ENCODE measurements at regions of chr11 and their contacts with region 1.

Region 1: DNA sequence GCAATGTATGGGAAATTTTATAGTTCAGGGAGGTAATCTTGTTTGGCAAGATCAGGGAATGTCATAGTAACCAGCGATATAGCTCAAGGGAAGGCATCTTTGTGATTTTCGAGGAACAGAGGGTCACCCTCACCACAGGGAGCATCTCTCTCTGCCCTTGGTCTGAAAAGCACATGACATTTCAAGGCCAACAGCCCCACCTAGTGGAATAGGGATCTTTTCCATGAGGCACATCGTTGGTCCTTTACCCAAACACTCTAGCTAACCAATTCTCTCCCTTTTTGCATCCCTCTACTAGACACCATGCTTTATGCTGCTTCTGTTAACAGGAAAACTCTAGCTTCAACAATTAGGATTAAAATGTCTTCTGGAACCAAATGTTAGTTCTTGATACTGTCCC is 179.0 kb downstream of the GRM5 start:
- DNase-seq: peak in 4 of 5 donors; percentile 26 to 35 (median 31)
- H3K4me3 ChIP-seq: no peak overlapping the region
- H3K4me3 Mint-ChIP-seq: no peak overlapping the region
- H3K27ac ChIP-seq: no peak overlapping the region
- H3K27ac Mint-ChIP-seq: peak overlapping the region in 1 of 7 donors; percentile 33
- H3K4me1 ChIP-seq: no peaks in the 10 kb centered on the region
- H3K4me1 Mint-ChIP-seq: peaks cover 0 to 2% (median under 1%) of the 10 kb centered on the region in 4 donors
- H3K27me3 ChIP-seq: no peaks in the 10 kb centered on the region
- H3K27me3 Mint-ChIP-seq: no peaks in the 10 kb centered on the region

Region 2: DNA sequence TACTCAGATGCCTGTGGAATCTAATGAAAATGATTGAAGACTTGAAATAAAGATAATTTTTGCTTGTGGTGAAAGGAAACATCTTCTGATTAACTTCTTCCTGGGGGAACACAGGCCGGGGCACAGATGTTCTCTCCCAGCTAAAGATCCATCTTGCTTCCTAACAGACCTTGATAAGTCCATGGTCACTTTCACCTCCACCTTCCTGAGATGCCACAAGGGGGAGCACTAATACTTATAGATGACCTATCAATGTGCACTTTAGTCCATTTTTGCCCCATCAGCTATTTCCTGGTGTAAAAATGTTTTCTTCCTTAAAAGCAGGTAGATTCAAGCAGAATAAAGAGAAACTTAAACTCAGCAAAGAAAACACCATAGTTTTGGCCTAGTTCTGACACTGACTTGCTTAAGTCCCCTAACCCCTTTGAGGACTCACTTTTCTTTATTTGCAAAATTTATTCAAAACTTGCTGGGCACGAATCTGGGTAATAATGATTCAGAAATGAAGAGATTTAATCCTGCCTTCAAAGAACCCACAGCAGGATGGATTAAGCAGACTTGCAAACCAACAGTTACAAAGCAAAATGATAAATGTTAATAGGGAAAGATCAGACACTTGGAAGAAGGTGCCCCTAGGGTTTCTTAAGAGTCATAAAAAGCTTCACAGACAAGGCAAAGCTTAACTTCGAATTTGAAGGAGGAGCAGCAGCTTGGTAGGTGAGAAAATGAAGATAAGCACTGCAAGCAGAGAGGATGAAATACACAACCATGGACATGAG is 870.2 kb before region 1 on chr11:
- CTCF ChIA-PET with region 1: interaction called, 12 read pairs
- POLR2A ChIA-PET with region 1: no interaction called
- intact Hi-C with region 1: loop called (anchors 1 kb)
- DNase-seq: peak; percentile 52 to 61 (median 54)
- H3K4me3 ChIP-seq: no peak overlapping the region
- H3K4me3 Mint-ChIP-seq: no peak overlapping the region
- H3K27ac ChIP-seq: no peak overlapping the region
- H3K27ac Mint-ChIP-seq: no peak overlapping the region
- H3K4me1 ChIP-seq: no peaks in the 10 kb centered on the region
- H3K4me1 Mint-ChIP-seq: no peaks in the 10 kb centered on the region
- H3K27me3 ChIP-seq: no peaks in the 10 kb centered on the region
- H3K27me3 Mint-ChIP-seq: peaks cover 3 to 6% of the 10 kb centered on the region in 2 donors

Region 3: GRCh38 chr11:88103337-88104206 is 783.2 kb before region 1 on chr11:
- CTCF ChIA-PET with region 1: interaction called, 3 read pairs
- POLR2A ChIA-PET with region 1: no interaction called
- intact Hi-C with region 1: loop called (anchors 2 kb)
- DNase-seq: peak in 4 of 5 donors; percentile 17 to 52 (median 38)
- H3K4me3 ChIP-seq: no peak overlapping the region
- H3K4me3 Mint-ChIP-seq: no peak overlapping the region
- H3K27ac ChIP-seq: no peak overlapping the region
- H3K27ac Mint-ChIP-seq: no peak overlapping the region
- H3K4me1 ChIP-seq: no peaks in the 10 kb centered on the region
- H3K4me1 Mint-ChIP-seq: no peaks in the 10 kb centered on the region
- H3K27me3 ChIP-seq: no peaks in the 10 kb centered on the region
- H3K27me3 Mint-ChIP-seq: peaks cover 5 to 7% of the 10 kb centered on the region in 2 donors

Region 4: GRCh38 chr11:88231894-88232482 is 654.8 kb before region 1 on chr11:
- CTCF ChIA-PET with region 1: interaction called, 3 read pairs
- POLR2A ChIA-PET with region 1: no interaction called
- intact Hi-C with region 1: loop called (anchors 5 kb)
- DNase-seq: peak in 3 of 5 donors; percentile 20 to 35 (median 22)
- H3K4me3 ChIP-seq: no peak overlapping the region
- H3K4me3 Mint-ChIP-seq: no peak overlapping the region
- H3K27ac ChIP-seq: no peak overlapping the region
- H3K27ac Mint-ChIP-seq: no peak overlapping the region
- H3K4me1 ChIP-seq: no peaks in the 10 kb centered on the region
- H3K4me1 Mint-ChIP-seq: no peaks in the 10 kb centered on the region
- H3K27me3 ChIP-seq: no peaks in the 10 kb centered on the region
- H3K27me3 Mint-ChIP-seq: no peaks in the 10 kb centered on the region

Region 5: GRCh38 chr11:88484873-88485621 is 401.7 kb before region 1 on chr11:
- CTCF ChIA-PET with region 1: no interaction called
- POLR2A ChIA-PET with region 1: no interaction called
- intact Hi-C with region 1: loop called (anchors 5 kb)
- DNase-seq: peak in 4 of 5 donors; percentile 21 to 33 (median 25)
- H3K4me3 ChIP-seq: no peak overlapping the region
- H3K4me3 Mint-ChIP-seq: no peak overlapping the region
- H3K27ac ChIP-seq: no peak overlapping the region
- H3K27ac Mint-ChIP-seq: peak overlapping the region in 1 of 7 donors; percentile 26
- H3K4me1 ChIP-seq: peaks cover 2% of the 10 kb centered on the region
- H3K4me1 Mint-ChIP-seq: peaks cover 0 to 6% (median 4%) of the 10 kb centered on the region in 4 donors
- H3K27me3 ChIP-seq: no peaks in the 10 kb centered on the region
- H3K27me3 Mint-ChIP-seq: peaks cover 0 to 6% of the 10 kb centered on the region in 2 donors

Region 6: GRCh38 chr11:88909500-88909899 is 22.7 kb after region 1 on chr11:
- CTCF ChIA-PET with region 1: no interaction called
- POLR2A ChIA-PET with region 1: no interaction called
- intact Hi-C with region 1: no loop called
- DNase-seq: no peak
- H3K4me3 ChIP-seq: no peak overlapping the region
- H3K4me3 Mint-ChIP-seq: no peak overlapping the region
- H3K27ac ChIP-seq: no peak overlapping the region
- H3K27ac Mint-ChIP-seq: no peak overlapping the region
- H3K4me1 ChIP-seq: no peaks in the 10 kb centered on the region
- H3K4me1 Mint-ChIP-seq: no peaks in the 10 kb centered on the region
- H3K27me3 ChIP-seq: no peaks in the 10 kb centered on the region
- H3K27me3 Mint-ChIP-seq: peaks cover 0 to 2% of the 10 kb centered on the region in 2 donors

Measured in CD4-positive, alpha-beta memory T cell (primary cell).